Caco-2 (cell line): ENCODE measurements at regions of chr13 and their contacts with region 1.

Region 1: DNA sequence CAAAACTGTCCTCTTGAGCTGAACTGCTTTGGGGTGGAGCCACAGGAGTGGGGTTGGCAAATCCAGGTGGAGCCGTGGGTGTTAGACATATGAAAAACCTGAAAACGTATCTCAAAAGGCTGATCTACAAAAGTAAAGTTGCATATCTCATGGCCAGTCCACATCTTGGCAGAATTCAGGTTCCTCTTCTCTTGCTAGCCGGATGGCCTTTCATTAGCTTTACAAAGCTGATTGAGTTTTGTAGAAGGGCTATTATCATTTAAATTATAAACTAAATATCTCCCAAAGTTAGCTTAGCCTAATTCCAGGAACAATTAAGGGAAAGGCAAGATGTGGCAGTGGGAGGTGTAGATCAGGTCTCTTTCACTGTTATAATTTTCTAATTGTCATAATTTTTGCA is 1427.7 kb downstream of the EFNB2 start:
- DNase-seq: no peak
- H3K4me3 ChIP-seq: no peak overlapping the region
- H3K4me3 Mint-ChIP-seq: no peak overlapping the region
- H3K27ac Mint-ChIP-seq: no peak overlapping the region
- H3K4me1 ChIP-seq: no peaks in the 10 kb centered on the region
- H3K4me1 Mint-ChIP-seq: no peaks in the 10 kb centered on the region
- H3K27me3 ChIP-seq: no peaks in the 10 kb centered on the region
- H3K27me3 Mint-ChIP-seq: peaks cover 10% of the 10 kb centered on the region
- CTCF ChIP-seq: no peak

Region 2: DNA sequence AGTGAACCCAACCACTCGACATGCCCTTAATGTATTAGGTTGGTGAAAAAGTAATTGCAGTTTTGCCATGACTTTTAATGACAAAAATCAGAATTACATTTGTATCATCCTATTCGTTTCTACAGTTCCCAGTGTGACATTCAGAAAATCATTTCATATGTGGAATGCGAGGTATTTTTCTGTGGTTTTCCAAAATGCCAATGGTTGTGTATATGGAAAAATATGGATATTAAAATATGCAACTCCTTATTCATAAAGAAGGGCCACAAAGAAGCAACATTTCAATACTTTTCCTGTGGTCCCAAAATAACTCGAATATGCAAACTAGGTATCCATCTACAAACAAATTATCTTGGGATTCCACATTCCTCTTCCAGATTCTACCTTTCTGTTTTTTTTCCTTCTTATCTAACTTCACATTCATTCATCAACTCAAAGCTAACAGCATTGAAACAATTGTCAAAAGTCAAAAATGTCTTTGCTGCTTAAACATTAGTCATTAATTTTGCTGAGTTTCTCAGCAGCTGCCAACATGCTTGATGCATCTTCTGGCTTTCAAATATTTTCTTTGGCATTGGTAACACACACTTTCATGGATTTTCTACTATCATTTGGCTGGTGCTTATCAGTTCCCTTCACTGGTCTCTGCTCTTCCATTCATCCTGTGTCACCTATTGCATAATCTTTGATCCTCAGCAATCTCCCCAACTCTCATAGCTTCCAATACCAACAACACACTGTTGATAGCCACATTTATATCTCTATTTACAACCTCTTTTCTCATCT is 17.7 kb before region 1 on chr13:
- CTCF ChIA-PET with region 1: no interaction called
- POLR2A ChIA-PET with region 1: no interaction called
- intact Hi-C with region 1: loop called (anchors 2 kb)
- DNase-seq: no peak
- H3K4me3 ChIP-seq: no peak overlapping the region
- H3K4me3 Mint-ChIP-seq: no peak overlapping the region
- H3K27ac Mint-ChIP-seq: no peak overlapping the region
- H3K4me1 ChIP-seq: no peaks in the 10 kb centered on the region
- H3K4me1 Mint-ChIP-seq: no peaks in the 10 kb centered on the region
- H3K27me3 ChIP-seq: no peaks in the 10 kb centered on the region
- H3K27me3 Mint-ChIP-seq: peaks cover 4% of the 10 kb centered on the region
- CTCF ChIP-seq: no peak